PC-9 (cell line): ENCODE measurements at regions of chr2 and their contacts with region 1.

Region 1: GRCh38 chr2:105576440-105577252 is 168.1 kb upstream of the NCK2 start:
- DNase-seq: peak in 1 of 2 experiments; percentile 76
- H3K4me3 ChIP-seq: no peak overlapping the region
- H3K27ac ChIP-seq: no peak overlapping the region
- H3K4me1 ChIP-seq: peaks cover 5% of the 10 kb centered on the region
- H3K27me3 ChIP-seq: peaks cover 28% of the 10 kb centered on the region; the same call in 1 of the 2 replicates
- CTCF ChIP-seq: peak; percentile 69

Region 2: DNA sequence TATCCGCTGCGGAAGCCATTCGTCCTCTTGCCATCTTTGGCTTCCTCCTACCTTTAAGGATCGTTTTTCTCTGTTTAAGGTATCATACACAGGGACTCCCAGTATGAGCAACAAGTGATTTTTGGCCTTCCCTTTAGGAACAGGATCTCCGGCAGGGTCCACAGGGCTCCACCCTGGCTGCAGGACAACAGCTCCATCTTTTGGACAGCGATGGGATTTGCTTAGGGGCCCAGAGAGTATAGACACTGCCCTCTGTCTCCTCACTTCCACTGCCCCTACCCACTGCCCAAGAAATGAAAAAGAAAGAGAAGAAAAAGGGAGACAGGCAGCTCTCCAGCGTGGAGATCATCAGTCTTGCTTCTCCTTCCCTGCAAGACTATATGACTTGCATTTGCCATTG is 392.9 kb after region 1 on chr2:
- CTCF ChIA-PET with region 1: no interaction called
- POLR2A ChIA-PET with region 1: no interaction called
- intact Hi-C with region 1: loop called (anchors 5 kb)
- DNase-seq: peak in 1 of 2 experiments; percentile 25
- H3K4me3 ChIP-seq: no peak overlapping the region
- H3K27ac ChIP-seq: no peak overlapping the region
- H3K4me1 ChIP-seq: no peaks in the 10 kb centered on the region
- H3K27me3 ChIP-seq: peaks cover 21% of the 10 kb centered on the region
- CTCF ChIP-seq: peak; percentile 53

Region 3: DNA sequence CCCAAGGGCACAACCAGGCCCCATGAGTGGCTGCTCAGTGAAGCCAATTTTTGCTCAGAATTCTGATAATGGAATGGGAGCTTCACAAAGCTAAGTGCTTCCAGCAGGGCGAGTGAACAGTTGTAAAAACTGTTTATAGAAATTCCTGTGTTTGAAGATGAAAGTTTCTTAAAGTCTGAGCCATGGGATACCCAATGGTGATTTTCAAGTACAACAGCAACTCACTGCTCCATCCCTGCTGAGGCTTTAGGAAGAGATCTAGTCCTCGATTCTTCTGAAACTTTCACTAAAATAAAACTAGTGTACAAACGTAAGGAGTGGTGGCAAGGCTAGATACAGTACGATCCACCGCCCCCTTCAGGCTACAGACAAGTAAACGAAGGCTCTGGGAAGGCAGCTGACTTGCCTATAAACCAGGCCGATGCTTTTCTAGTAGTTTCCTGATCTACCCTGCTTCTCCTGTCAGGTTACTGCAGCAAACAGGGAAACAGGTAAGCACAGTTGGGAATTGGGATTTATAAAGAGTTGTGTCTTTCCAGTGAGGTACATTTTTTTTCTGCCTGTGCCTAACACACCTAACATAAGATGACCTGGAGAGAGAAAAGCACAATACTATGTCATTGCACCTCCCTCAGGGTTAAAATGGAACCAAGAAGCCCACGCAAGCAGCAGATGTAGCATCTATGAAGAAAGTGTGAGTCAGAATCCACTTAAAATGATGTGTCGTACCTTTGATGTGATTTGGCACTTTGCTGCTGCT is 508.7 kb after region 1 on chr2:
- CTCF ChIA-PET with region 1: no interaction called
- POLR2A ChIA-PET with region 1: no interaction called
- intact Hi-C with region 1: loop called (anchors 5 kb)
- DNase-seq: no peak
- H3K4me3 ChIP-seq: no peak overlapping the region
- H3K27ac ChIP-seq: no peak overlapping the region
- H3K4me1 ChIP-seq: no peaks in the 10 kb centered on the region
- H3K27me3 ChIP-seq: no peaks in the 10 kb centered on the region
- CTCF ChIP-seq: no peak